HEK293T (cell line): ENCODE measurements at regions of chr3 and their contacts with region 1.

Region 1: GRCh38 chr3:112013058-112013783 is 14.5 kb downstream of the TAGLN3 start:
- DNase-seq: peak; percentile 48

Region 2: DNA sequence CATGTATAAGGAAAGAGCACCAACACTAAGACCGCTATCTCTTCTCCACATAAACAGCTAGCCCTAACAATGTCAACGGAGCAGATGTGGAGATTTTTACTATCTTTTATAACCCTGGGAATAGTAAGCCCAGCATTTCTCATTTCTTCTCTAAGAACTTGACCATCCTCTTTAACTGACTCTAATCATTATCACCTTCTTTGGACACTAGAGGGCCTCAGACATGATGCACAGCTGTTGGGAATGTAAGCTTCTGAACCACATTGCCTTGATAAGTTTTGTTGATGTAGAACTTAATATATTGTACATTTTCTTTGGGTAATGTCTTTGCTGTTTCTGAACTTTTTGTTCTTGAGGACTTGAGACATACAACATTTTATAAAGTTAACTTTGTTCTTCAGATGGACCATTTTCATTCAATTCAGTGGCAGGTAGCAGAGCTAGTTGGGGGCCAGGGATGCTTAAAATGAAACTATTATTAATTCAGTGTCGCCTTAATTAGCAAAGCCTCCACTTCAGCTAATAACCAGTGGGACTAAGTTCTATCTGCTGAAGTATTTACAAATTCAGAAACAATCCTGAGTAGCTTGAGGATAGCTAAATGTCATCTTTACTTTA is 24.1 kb before region 1 on chr3:
- CTCF ChIA-PET with region 1: interaction called, 18 read pairs
- POLR2A ChIA-PET with region 1: interaction called, 3 read pairs
- DNase-seq: peak; percentile 27

Region 3: DNA sequence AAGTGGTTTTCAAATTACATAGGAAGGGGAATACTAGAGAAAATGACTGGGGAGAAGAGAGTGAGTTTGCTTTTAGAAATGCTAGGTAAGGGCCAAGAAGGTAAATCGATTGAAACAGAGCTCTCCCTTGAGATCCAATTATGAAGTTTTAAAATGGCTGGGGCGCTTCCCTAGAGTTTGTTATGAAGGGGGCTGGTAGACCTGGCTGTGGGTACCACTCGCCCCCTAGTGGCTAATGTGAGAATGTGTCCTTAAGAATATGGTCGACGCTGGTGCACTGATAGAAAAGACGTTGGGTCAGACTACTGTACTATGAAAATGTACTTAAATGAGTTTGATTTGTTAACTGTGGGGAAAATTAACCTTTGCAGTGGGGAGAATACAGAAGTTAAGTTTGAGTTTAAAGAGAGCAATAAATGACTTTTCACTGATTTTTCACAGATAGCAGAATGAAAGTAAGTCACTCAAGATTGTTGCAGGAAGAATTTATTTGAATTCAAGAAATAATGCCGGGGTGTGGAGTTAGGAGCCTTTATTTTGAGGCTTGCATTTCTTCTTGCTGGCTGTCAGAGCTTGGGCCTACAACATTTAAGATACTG is 30.5 kb after region 1 on chr3:
- CTCF ChIA-PET with region 1: interaction called, 11 read pairs
- POLR2A ChIA-PET with region 1: no interaction called
- DNase-seq: peak; percentile 80